CD14-positive monocyte (primary cell): ENCODE measurements at regions of chr6 and their contacts with region 1.

Region 1: GRCh38 chr6:13487122-13488014 is at the start of gene GFOD1:
- DNase-seq: peak; percentile 72 to 79 (median 77)
- H3K4me3 ChIP-seq: peak within 1 kb of the TSS; percentile 61 to 92 (median 64)
- H3K4me3 Mint-ChIP-seq: peak within 1 kb of the TSS; percentile 98 to 99
- H3K27ac ChIP-seq: peak within 1 kb of the TSS; percentile 75 to 86
- H3K27ac Mint-ChIP-seq: peak within 1 kb of the TSS; percentile 46 to 92 (median 86)
- H3K4me1 ChIP-seq: peaks cover 27 to 44% of the 10 kb centered on the region in 2 donors
- H3K4me1 Mint-ChIP-seq: peaks cover 47% of the 10 kb centered on the region
- H3K27me3 ChIP-seq: peaks cover 0 to 7% of the 10 kb centered on the region in 2 donors
- H3K27me3 Mint-ChIP-seq: peaks cover 3 to 14% (median 14%) of the 10 kb centered on the region in 3 donors
- CTCF ChIP-seq: peak; percentile 17
- polyA plus RNA-seq, gene GFOD1: 2.4 to 8.7 (median 2.4) TPM

Region 2: GRCh38 chr6:13413900-13414555 is 73.3 kb before region 1 on chr6:
- intact Hi-C with region 1: loop called in 1 of 2 experiments (anchors 10 kb)
- DNase-seq: peak in 2 of 3 donors; percentile 43 to 50
- H3K4me3 ChIP-seq: no peak overlapping the region
- H3K4me3 Mint-ChIP-seq: no peak overlapping the region
- H3K27ac ChIP-seq: peak overlapping the region in 1 of 2 donors; percentile 63
- H3K27ac Mint-ChIP-seq: peak overlapping the region in 4 of 7 donors; percentile 26 to 74 (median 48)
- H3K4me1 ChIP-seq: peaks cover 34 to 41% of the 10 kb centered on the region in 2 donors
- H3K4me1 Mint-ChIP-seq: peaks cover 42% of the 10 kb centered on the region
- H3K27me3 ChIP-seq: no peaks in the 10 kb centered on the region
- H3K27me3 Mint-ChIP-seq: peaks cover 0 to 7% (median 2%) of the 10 kb centered on the region in 3 donors
- CTCF ChIP-seq: no peak

Region 3: DNA sequence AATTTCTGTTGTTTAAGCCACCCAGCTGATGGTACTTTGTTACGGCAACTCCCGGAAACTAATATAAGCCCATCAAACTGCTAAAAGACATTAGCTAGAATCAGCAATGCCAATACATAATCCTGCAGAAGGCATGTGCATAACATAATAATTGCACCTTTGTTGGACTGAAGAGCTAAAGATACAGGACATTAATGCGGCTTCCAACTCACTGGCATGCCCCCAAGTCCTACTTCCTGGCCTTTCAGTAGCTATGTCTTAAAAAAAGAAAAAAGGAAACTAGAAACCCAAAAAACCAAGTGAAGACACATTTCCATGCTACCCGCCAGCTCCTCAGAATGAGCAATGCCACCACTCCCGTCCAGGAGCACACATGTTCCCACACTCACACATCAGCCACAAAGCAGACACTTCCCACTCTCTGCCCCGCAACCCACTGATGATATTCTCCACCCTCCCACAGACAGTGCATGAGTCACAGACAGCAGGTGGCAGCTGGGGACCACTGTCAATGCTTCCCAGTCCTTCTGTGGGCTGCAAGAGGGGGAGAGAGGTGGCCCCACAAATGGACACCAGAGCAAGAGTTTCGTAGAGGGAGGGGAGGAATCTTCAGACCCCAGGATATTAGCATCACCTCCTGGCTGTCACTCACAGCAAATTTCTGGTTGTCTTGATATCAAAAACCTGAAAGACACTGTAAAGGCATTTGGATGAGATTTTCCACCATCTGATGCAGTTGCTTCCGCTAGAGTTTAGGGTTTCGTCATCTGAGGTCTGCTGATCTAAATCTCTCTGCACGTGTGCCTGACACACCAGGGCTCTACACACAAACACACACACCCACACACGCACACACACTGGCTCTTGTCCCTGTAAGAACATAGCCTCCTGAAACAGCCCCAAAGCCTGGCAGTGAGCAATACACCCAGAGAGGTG is 32.8 kb before region 1 on chr6:
- intact Hi-C with region 1: loop called (anchors 5 kb)
- DNase-seq: peak; percentile 89 to 95 (median 94)
- H3K4me3 ChIP-seq: peak overlapping the region in 1 of 3 experiments; percentile 11
- H3K4me3 Mint-ChIP-seq: peak overlapping the region; percentile 61 to 72
- H3K27ac ChIP-seq: peak overlapping the region; percentile 71 to 83
- H3K27ac Mint-ChIP-seq: peak overlapping the region; percentile 89 to 99 (median 92)
- H3K4me1 ChIP-seq: peaks cover 19 to 20% of the 10 kb centered on the region in 2 donors
- H3K4me1 Mint-ChIP-seq: peaks cover 23% of the 10 kb centered on the region
- H3K27me3 ChIP-seq: no peaks in the 10 kb centered on the region
- H3K27me3 Mint-ChIP-seq: peaks cover 2% of the 10 kb centered on the region in 3 donors
- CTCF ChIP-seq: no peak

Region 4: GRCh38 chr6:13466304-13467215 is 20.8 kb before region 1 on chr6:
- intact Hi-C with region 1: loop called in 1 of 2 experiments (anchors 2 kb)
- DNase-seq: peak in 1 of 3 donors; percentile 44
- H3K4me3 ChIP-seq: no peak overlapping the region
- H3K4me3 Mint-ChIP-seq: no peak overlapping the region
- H3K27ac ChIP-seq: peak overlapping the region in 1 of 2 donors; percentile 39
- H3K27ac Mint-ChIP-seq: peak overlapping the region in 6 of 7 donors; percentile 72 to 95 (median 82)
- H3K4me1 ChIP-seq: peaks cover 37 to 39% of the 10 kb centered on the region in 2 donors
- H3K4me1 Mint-ChIP-seq: peaks cover 49% of the 10 kb centered on the region
- H3K27me3 ChIP-seq: no peaks in the 10 kb centered on the region
- H3K27me3 Mint-ChIP-seq: peaks cover 0 to 3% (median 0%) of the 10 kb centered on the region in 3 donors
- CTCF ChIP-seq: no peak

Region 5: DNA sequence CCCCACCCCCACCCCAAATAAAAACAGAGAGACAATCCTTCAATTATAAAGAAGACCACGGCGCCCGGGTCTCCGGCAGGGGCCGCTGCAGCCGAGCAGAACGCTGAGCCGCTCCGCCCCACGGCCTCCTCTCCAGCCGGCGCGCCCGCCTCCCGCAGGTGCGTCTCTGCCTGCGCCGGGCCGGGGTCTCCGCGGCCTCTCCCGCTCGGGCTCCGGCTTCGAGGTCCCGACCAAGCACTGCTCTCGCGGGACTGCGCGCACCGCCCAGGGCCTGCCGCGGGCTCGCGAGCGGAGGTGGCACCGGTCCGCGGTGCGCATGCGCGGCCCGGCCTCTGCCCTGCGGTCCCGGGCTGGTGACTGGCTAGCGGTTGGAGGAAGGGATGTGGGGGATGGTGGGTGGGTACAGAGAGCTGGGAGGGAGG is 86.8 kb after region 1 on chr6:
- intact Hi-C with region 1: loop called (anchors 5 to 10 kb)
- DNase-seq: peak; percentile 85 to 89 (median 86)
- H3K4me3 ChIP-seq: peak overlapping the region; percentile 71 to 94 (median 87)
- H3K4me3 Mint-ChIP-seq: peak overlapping the region; percentile 96 to 97
- H3K27ac ChIP-seq: peak overlapping the region; percentile 92
- H3K27ac Mint-ChIP-seq: peak overlapping the region; percentile 95 to 99 (median 97)
- H3K4me1 ChIP-seq: peaks cover 11 to 16% of the 10 kb centered on the region in 2 donors
- H3K4me1 Mint-ChIP-seq: peaks cover 17% of the 10 kb centered on the region
- H3K27me3 ChIP-seq: no peaks in the 10 kb centered on the region
- H3K27me3 Mint-ChIP-seq: peaks cover 4 to 6% (median 4%) of the 10 kb centered on the region in 3 donors
- CTCF ChIP-seq: peak; percentile 40

Region 6: DNA sequence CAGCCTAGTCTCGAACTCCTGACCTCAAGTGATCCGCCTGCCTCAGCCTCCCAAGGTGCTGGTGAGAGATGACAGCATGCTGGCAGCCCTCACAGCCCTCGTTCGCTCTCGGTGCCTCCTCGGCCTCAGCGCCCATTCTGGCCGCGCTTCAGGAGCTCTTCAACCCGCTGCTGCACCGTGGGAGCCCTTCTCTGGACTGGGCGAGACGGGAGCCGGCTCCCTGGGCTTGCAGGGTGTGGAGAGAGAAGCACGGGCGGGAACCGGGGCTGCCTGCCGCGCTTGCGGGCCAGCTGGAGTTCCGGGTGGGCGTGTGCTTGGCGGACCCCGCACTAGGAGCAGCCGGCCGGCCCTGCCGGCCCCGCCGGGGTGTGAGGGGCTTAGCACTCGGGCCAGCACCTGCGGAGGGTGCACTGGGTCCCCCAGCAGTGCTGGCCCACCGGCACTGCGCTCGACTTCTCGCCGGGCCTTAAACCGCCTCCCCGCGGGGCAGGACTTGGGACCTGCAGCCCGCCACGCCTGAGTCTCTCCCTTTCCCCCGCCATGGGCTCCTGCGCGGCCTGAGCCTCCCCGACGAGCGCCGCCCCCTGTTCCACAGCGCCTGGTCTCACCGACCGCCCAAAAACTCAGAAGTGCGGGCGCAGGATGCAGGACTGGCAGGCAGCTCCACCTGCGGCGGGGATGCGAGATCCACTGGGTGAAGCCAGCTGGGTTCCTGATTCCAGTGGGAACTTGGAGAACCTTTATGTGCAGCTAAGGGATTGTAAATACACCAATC is 255.8 kb after region 1 on chr6:
- intact Hi-C with region 1: no loop called
- DNase-seq: no peak
- H3K4me3 ChIP-seq: peak overlapping the region in 1 of 3 experiments; percentile 30
- H3K4me3 Mint-ChIP-seq: peak overlapping the region; percentile 54 to 80
- H3K27ac ChIP-seq: no peak overlapping the region
- H3K27ac Mint-ChIP-seq: peak overlapping the region in 1 of 7 donors; percentile 31
- H3K4me1 ChIP-seq: no peaks in the 10 kb centered on the region
- H3K4me1 Mint-ChIP-seq: no peaks in the 10 kb centered on the region
- H3K27me3 ChIP-seq: no peaks in the 10 kb centered on the region
- H3K27me3 Mint-ChIP-seq: peaks cover 1 to 6% (median 5%) of the 10 kb centered on the region in 3 donors
- CTCF ChIP-seq: no peak